Caco-2 (cell line): ENCODE measurements at regions of chr11 and their contacts with region 1.

Region 1: GRCh38 chr11:63132985-63133775 is 10.8 kb downstream of the SLC22A24 start:
- DNase-seq: no peak
- H3K4me3 ChIP-seq: no peak overlapping the region
- H3K4me3 Mint-ChIP-seq: no peak overlapping the region
- H3K27ac Mint-ChIP-seq: no peak overlapping the region
- H3K4me1 ChIP-seq: no peaks in the 10 kb centered on the region
- H3K4me1 Mint-ChIP-seq: no peaks in the 10 kb centered on the region
- H3K27me3 ChIP-seq: no peaks in the 10 kb centered on the region
- H3K27me3 Mint-ChIP-seq: peaks cover 2% of the 10 kb centered on the region
- CTCF ChIP-seq: no peak

Region 2: DNA sequence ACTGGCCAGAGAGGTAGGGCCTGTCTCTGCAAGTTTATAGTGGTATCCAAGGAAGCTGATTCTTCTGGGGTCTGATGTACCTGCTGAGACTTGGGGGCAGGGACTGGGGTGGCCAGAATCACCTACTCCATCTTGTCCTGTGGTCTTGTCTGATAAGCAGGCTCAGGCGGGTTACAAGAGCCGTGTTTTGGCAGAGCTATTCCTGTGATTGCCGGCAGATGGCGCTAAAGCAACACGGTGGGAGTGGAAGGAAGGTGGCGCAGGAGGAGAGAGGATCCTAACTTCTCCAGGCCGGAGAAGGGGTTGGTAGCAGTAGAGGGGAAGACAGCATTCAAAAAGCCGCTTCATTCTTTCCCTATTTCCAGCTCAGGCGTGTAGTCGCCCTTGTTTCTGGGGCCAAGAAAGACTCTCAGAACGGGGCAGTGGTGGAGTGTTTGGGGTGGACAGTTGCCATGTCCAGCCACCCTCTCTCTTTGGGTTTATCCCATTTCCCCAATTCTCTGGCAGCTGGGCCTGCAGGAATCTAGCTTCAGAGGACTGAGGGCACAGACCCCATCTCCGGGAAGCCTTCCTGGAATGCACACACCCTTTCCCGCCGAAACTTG is 227.2 kb before region 1 on chr11:
- CTCF ChIA-PET with region 1: no interaction called
- POLR2A ChIA-PET with region 1: no interaction called
- intact Hi-C with region 1: loop called (anchors 5 kb)
- DNase-seq: peak; percentile 84 to 88
- H3K4me3 ChIP-seq: no peak overlapping the region
- H3K4me3 Mint-ChIP-seq: no peak overlapping the region
- H3K27ac Mint-ChIP-seq: no peak overlapping the region
- H3K4me1 ChIP-seq: peaks cover 9% of the 10 kb centered on the region; the same call in 1 of the 2 replicates
- H3K4me1 Mint-ChIP-seq: peaks cover 5% of the 10 kb centered on the region
- H3K27me3 ChIP-seq: no peaks in the 10 kb centered on the region
- H3K27me3 Mint-ChIP-seq: no peaks in the 10 kb centered on the region
- CTCF ChIP-seq: peak; percentile 98 to 99

Region 3: GRCh38 chr11:63042596-63042995 is 90.6 kb before region 1 on chr11:
- CTCF ChIA-PET with region 1: no interaction called
- POLR2A ChIA-PET with region 1: no interaction called
- intact Hi-C with region 1: loop called (anchors 5 kb)
- DNase-seq: no peak
- H3K4me3 ChIP-seq: no peak overlapping the region
- H3K4me3 Mint-ChIP-seq: no peak overlapping the region
- H3K27ac Mint-ChIP-seq: no peak overlapping the region
- H3K4me1 ChIP-seq: no peaks in the 10 kb centered on the region
- H3K4me1 Mint-ChIP-seq: no peaks in the 10 kb centered on the region
- H3K27me3 ChIP-seq: no peaks in the 10 kb centered on the region
- H3K27me3 Mint-ChIP-seq: peaks cover 6% of the 10 kb centered on the region
- CTCF ChIP-seq: no peak

Region 4: DNA sequence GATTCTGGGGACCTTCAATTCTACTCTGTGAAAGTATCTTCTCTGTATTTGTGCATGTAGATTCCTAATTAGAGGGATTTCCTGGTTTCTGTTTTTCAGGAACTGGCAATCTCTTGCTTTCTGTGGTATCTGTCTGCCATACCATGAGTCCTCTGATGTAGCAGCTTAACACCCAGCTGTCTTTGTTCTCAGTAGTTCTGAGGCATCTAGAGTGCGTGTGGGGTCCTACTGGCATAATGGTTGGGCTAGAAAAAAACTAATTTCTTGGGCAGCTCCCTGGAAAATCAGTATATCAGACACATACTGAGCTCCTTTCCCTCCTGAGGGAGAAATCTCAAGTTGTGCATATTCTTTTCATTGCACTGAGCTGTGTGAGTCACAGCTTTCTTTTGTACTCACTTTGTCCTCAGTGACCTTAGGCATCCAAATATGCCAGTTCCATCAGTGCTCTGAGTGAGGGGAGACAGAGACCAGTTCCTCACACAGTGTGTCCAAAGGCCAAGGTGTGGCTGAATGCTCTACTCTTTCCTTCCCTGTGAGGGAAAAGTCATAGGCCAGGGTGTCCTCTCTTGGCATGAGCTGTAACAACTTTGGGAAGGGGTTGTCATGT is 46.4 kb after region 1 on chr11:
- CTCF ChIA-PET with region 1: no interaction called
- POLR2A ChIA-PET with region 1: no interaction called
- intact Hi-C with region 1: no loop called
- DNase-seq: no peak
- H3K4me3 ChIP-seq: no peak overlapping the region
- H3K4me3 Mint-ChIP-seq: no peak overlapping the region
- H3K27ac Mint-ChIP-seq: no peak overlapping the region
- H3K4me1 ChIP-seq: no peaks in the 10 kb centered on the region
- H3K4me1 Mint-ChIP-seq: no peaks in the 10 kb centered on the region
- H3K27me3 ChIP-seq: no peaks in the 10 kb centered on the region
- H3K27me3 Mint-ChIP-seq: peaks cover 15% of the 10 kb centered on the region
- CTCF ChIP-seq: no peak

Region 5: GRCh38 chr11:63212742-63213141 is 79.6 kb after region 1 on chr11:
- CTCF ChIA-PET with region 1: no interaction called
- POLR2A ChIA-PET with region 1: no interaction called
- intact Hi-C with region 1: loop called (anchors 1 kb)
- DNase-seq: peak in 1 of 2 experiments; percentile 57
- H3K4me3 ChIP-seq: no peak overlapping the region
- H3K4me3 Mint-ChIP-seq: no peak overlapping the region
- H3K27ac Mint-ChIP-seq: no peak overlapping the region
- H3K4me1 ChIP-seq: no peaks in the 10 kb centered on the region; the same call in 1 of the 2 replicates
- H3K4me1 Mint-ChIP-seq: no peaks in the 10 kb centered on the region
- H3K27me3 ChIP-seq: no peaks in the 10 kb centered on the region
- H3K27me3 Mint-ChIP-seq: peaks cover 3% of the 10 kb centered on the region
- CTCF ChIP-seq: peak; percentile 55 to 57